ENCODE measurements at regions of chr11 and their contacts with region 1.

Region 1: GRCh38 chr11:47858169-47858543 is 10.0 kb upstream of the NUP160 start:
- DNase-seq: no peak
- H3K4me3 ChIP-seq: no peak overlapping the region
- H3K27ac ChIP-seq: no peak overlapping the region
- H3K4me1 ChIP-seq: peaks cover 55% of the 10 kb centered on the region
- H3K27me3 ChIP-seq: no peaks in the 10 kb centered on the region
- CTCF ChIP-seq: no peak

Region 2: GRCh38 chr11:47407746-47408590 is 450.2 kb before region 1 on chr11 and contains the start of gene SLC39A13:
- CTCF ChIA-PET with region 1: no interaction called
- POLR2A ChIA-PET with region 1: no interaction called
- intact Hi-C with region 1: loop called (anchors 10 kb)
- DNase-seq: peak; percentile 99
- H3K4me3 ChIP-seq: peak within 1 kb of the TSS; percentile 70
- H3K27ac ChIP-seq: peak within 1 kb of the TSS; percentile 83
- H3K4me1 ChIP-seq: peaks cover 21% of the 10 kb centered on the region
- H3K27me3 ChIP-seq: no peaks in the 10 kb centered on the region
- CTCF ChIP-seq: peak; percentile 75
- total RNA-seq, gene SLC39A13: 53.3 and 64.2 TPM in 2 replicates

Region 3: GRCh38 chr11:47565340-47566148 is 292.6 kb before region 1 on chr11 and contains the start of gene PTPMT1:
- CTCF ChIA-PET with region 1: interaction called, 6 read pairs
- POLR2A ChIA-PET with region 1: no interaction called
- intact Hi-C with region 1: loop called (anchors 10 kb)
- DNase-seq: peak; percentile 91
- H3K4me3 ChIP-seq: peak within 1 kb of the TSS; percentile 73
- H3K27ac ChIP-seq: peak within 1 kb of the TSS; percentile 90
- H3K4me1 ChIP-seq: peaks cover 10% of the 10 kb centered on the region
- H3K27me3 ChIP-seq: no peaks in the 10 kb centered on the region
- CTCF ChIP-seq: no peak
- total RNA-seq, gene PTPMT1: 68.1 and 74.3 TPM in 2 replicates

Region 4: DNA sequence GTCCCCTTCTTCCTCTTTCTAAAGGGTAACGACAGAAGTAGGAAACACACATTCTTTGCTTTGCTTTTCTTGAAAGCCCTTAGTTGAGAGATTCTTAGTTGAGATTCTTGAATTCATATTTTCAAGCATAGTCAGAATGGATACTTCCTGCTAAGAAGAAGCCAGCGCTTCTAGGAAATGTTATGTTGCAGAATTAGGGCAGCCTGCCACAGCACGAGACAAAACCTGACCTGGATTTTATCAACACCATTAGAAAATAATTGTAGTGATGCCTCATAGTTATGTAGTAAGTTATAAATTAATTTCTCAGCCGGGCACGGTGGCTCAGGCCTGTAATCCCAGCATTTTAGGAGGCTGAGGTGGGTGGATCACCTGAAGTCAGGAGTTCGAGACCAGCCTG is 27.9 kb after region 1 on chr11:
- CTCF ChIA-PET with region 1: interaction called, 10 read pairs
- POLR2A ChIA-PET with region 1: no interaction called
- intact Hi-C with region 1: no loop called
- DNase-seq: no peak
- H3K4me3 ChIP-seq: no peak overlapping the region
- H3K27ac ChIP-seq: no peak overlapping the region
- H3K4me1 ChIP-seq: peaks cover 11% of the 10 kb centered on the region
- H3K27me3 ChIP-seq: no peaks in the 10 kb centered on the region
- CTCF ChIP-seq: no peak

Measured in A673 (cell line).